Naive thymus-derived CD4-positive, alpha-beta T cell (primary cell): ENCODE measurements at regions of chr1 and their contacts with region 1.

Region 1: DNA sequence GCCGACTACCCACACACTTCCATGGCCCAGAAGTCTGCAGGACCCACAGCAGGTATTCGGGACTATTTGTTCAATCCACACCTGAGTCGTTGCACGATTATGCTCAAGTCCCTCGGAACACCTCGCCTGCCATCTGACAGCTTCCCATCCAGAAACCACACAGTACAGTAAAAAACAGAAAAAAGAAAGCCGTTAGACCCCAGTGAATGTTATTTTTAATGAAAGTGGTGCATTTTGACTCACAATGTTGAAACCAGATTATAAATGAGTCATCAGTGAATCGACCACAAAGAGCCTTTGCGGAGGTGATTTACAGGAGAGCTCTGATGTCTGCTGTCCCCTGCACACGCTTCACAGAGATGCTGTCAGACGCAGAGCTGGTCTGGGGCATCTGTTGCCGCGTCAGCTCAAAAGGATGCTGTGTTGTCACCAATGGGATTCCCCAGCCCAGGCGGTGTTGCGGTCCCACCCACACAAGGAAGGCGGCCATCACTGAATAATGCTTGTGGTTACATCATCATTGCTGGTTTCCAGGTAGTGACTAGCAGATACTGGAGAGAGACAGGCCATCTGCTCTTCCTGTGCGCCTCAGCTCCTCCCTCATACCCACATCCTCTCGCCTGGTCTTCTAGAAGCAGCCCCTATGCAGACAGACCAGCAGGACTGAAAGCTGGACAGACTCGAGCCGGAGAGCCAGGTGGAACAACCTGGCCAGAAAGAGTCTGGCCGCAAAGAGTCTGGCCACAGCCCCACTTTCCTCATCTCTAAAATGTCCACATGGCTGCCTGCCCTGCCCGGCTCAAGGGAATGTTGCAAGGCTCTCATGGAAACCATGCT is 116.8 kb downstream of the TOMM20 start:
- DNase-seq: peak; percentile 71 to 95 (median 93)
- ATAC-seq: peak; percentile 95
- H3K4me3 ChIP-seq: peak overlapping the region; percentile 48
- H3K4me3 Mint-ChIP-seq: peak overlapping the region; percentile 72 to 84 (median 80)
- H3K27ac ChIP-seq: peak overlapping the region; percentile 91
- H3K27ac Mint-ChIP-seq: peak overlapping the region; percentile 91 to 98 (median 97)
- H3K4me1 ChIP-seq: peaks cover 27 to 34% of the 10 kb centered on the region in 2 donors
- H3K4me1 Mint-ChIP-seq: peaks cover 36 to 79% (median 67%) of the 10 kb centered on the region in 7 donors
- H3K27me3 ChIP-seq: no peaks in the 10 kb centered on the region
- H3K27me3 Mint-ChIP-seq: peaks cover 0 to 5% (median 0%) of the 10 kb centered on the region in 5 donors

Region 2: GRCh38 chr1:233635765-233636502 is 1375.9 kb before region 1 on chr1:
- CTCF ChIA-PET with region 1: no interaction called
- POLR2A ChIA-PET with region 1: no interaction called
- intact Hi-C with region 1: no loop called
- DNase-seq: no peak
- ATAC-seq: no peak
- H3K4me3 ChIP-seq: no peak overlapping the region
- H3K4me3 Mint-ChIP-seq: no peak overlapping the region
- H3K27ac ChIP-seq: no peak overlapping the region
- H3K27ac Mint-ChIP-seq: peak overlapping the region in 1 of 9 donors; percentile 1
- H3K4me1 ChIP-seq: no peaks in the 10 kb centered on the region
- H3K4me1 Mint-ChIP-seq: no peaks in the 10 kb centered on the region
- H3K27me3 ChIP-seq: no peaks in the 10 kb centered on the region
- H3K27me3 Mint-ChIP-seq: peaks cover 4 to 40% (median 20%) of the 10 kb centered on the region in 5 donors

Region 3: GRCh38 chr1:234486498-234487448 is 525.0 kb before region 1 on chr1:
- CTCF ChIA-PET with region 1: no interaction called
- POLR2A ChIA-PET with region 1: no interaction called
- intact Hi-C with region 1: loop called in 1 of 2 experiments (anchors 5 kb)
- DNase-seq: peak in 6 of 9 donors; percentile 17 to 60 (median 44)
- ATAC-seq: peak; percentile 80
- H3K4me3 ChIP-seq: no peak overlapping the region
- H3K4me3 Mint-ChIP-seq: peak overlapping the region in 9 of 10 donors; percentile 10 to 74 (median 57)
- H3K27ac ChIP-seq: no peak overlapping the region
- H3K27ac Mint-ChIP-seq: peak overlapping the region; percentile 18 to 85 (median 79)
- H3K4me1 ChIP-seq: peaks cover 0 to 20% of the 10 kb centered on the region in 2 donors
- H3K4me1 Mint-ChIP-seq: peaks cover 20 to 42% (median 35%) of the 10 kb centered on the region in 7 donors
- H3K27me3 ChIP-seq: no peaks in the 10 kb centered on the region
- H3K27me3 Mint-ChIP-seq: peaks cover 0 to 22% (median 6%) of the 10 kb centered on the region in 5 donors

Region 4: GRCh38 chr1:234722904-234723720 is 288.7 kb before region 1 on chr1:
- CTCF ChIA-PET with region 1: no interaction called
- POLR2A ChIA-PET with region 1: no interaction called
- intact Hi-C with region 1: loop called (anchors 1 kb)
- DNase-seq: peak in 2 of 9 donors; percentile 51 to 68
- ATAC-seq: peak; percentile 12
- H3K4me3 ChIP-seq: peak overlapping the region; percentile 52
- H3K4me3 Mint-ChIP-seq: peak overlapping the region; percentile 51 to 85 (median 82)
- H3K27ac ChIP-seq: peak overlapping the region; percentile 95
- H3K27ac Mint-ChIP-seq: peak overlapping the region; percentile 87 to 99 (median 98)
- H3K4me1 ChIP-seq: peaks cover 39 to 46% of the 10 kb centered on the region in 2 donors
- H3K4me1 Mint-ChIP-seq: peaks cover 46 to 95% (median 84%) of the 10 kb centered on the region in 7 donors
- H3K27me3 ChIP-seq: no peaks in the 10 kb centered on the region
- H3K27me3 Mint-ChIP-seq: no peaks in the 10 kb centered on the region

Region 5: GRCh38 chr1:234842726-234843641 is 168.8 kb before region 1 on chr1:
- CTCF ChIA-PET with region 1: no interaction called
- POLR2A ChIA-PET with region 1: no interaction called
- intact Hi-C with region 1: loop called in 1 of 2 experiments (anchors 1 kb)
- DNase-seq: peak in 8 of 9 donors; percentile 7 to 81 (median 30)
- ATAC-seq: peak; percentile 26
- H3K4me3 ChIP-seq: peak overlapping the region; percentile 5
- H3K4me3 Mint-ChIP-seq: peak overlapping the region; percentile 30 to 77 (median 62)
- H3K27ac ChIP-seq: peak overlapping the region; percentile 15
- H3K27ac Mint-ChIP-seq: peak overlapping the region; percentile 30 to 90 (median 77)
- H3K4me1 ChIP-seq: peaks cover 36 to 57% of the 10 kb centered on the region in 2 donors
- H3K4me1 Mint-ChIP-seq: peaks cover 44 to 89% (median 74%) of the 10 kb centered on the region in 7 donors
- H3K27me3 ChIP-seq: no peaks in the 10 kb centered on the region
- H3K27me3 Mint-ChIP-seq: no peaks in the 10 kb centered on the region

Region 6: GRCh38 chr1:234862944-234863515 is 148.8 kb before region 1 on chr1:
- CTCF ChIA-PET with region 1: no interaction called
- POLR2A ChIA-PET with region 1: no interaction called
- intact Hi-C with region 1: no loop called
- DNase-seq: no peak
- ATAC-seq: no peak
- H3K4me3 ChIP-seq: no peak overlapping the region
- H3K4me3 Mint-ChIP-seq: no peak overlapping the region
- H3K27ac ChIP-seq: no peak overlapping the region
- H3K27ac Mint-ChIP-seq: no peak overlapping the region
- H3K4me1 ChIP-seq: no peaks in the 10 kb centered on the region
- H3K4me1 Mint-ChIP-seq: peaks cover 0 to 33% (median 10%) of the 10 kb centered on the region in 7 donors
- H3K27me3 ChIP-seq: peaks cover 0 to 2% of the 10 kb centered on the region in 2 donors
- H3K27me3 Mint-ChIP-seq: no peaks in the 10 kb centered on the region

Region 7: GRCh38 chr1:234978397-234979295 is 33.2 kb before region 1 on chr1:
- CTCF ChIA-PET with region 1: interaction called, 7 read pairs
- POLR2A ChIA-PET with region 1: interaction called, 5 read pairs
- intact Hi-C with region 1: loop called (anchors 1 to 2 kb)
- DNase-seq: peak in 4 of 9 donors; percentile 9 to 49 (median 40)
- ATAC-seq: peak; percentile 62
- H3K4me3 ChIP-seq: no peak overlapping the region
- H3K4me3 Mint-ChIP-seq: peak overlapping the region; percentile 16 to 78 (median 69)
- H3K27ac ChIP-seq: peak overlapping the region; percentile 18
- H3K27ac Mint-ChIP-seq: peak overlapping the region; percentile 66 to 94 (median 81)
- H3K4me1 ChIP-seq: peaks cover 34 to 48% of the 10 kb centered on the region in 2 donors
- H3K4me1 Mint-ChIP-seq: peaks cover 38 to 79% (median 45%) of the 10 kb centered on the region in 7 donors
- H3K27me3 ChIP-seq: no peaks in the 10 kb centered on the region
- H3K27me3 Mint-ChIP-seq: no peaks in the 10 kb centered on the region

Region 8: GRCh38 chr1:235648954-235649367 is 637.1 kb after region 1 on chr1:
- CTCF ChIA-PET with region 1: no interaction called
- POLR2A ChIA-PET with region 1: no interaction called
- intact Hi-C with region 1: loop called in 1 of 2 experiments (anchors 10 kb)
- DNase-seq: peak; percentile 18 to 70 (median 47)
- ATAC-seq: peak; percentile 84
- H3K4me3 ChIP-seq: peak overlapping the region; percentile 50
- H3K4me3 Mint-ChIP-seq: peak overlapping the region; percentile 58 to 90 (median 84)
- H3K27ac ChIP-seq: no peak overlapping the region
- H3K27ac Mint-ChIP-seq: peak overlapping the region in 3 of 9 donors; percentile 40 to 84 (median 73)
- H3K4me1 ChIP-seq: peaks cover 0 to 4% of the 10 kb centered on the region in 2 donors
- H3K4me1 Mint-ChIP-seq: peaks cover 11 to 33% (median 15%) of the 10 kb centered on the region in 7 donors
- H3K27me3 ChIP-seq: peaks cover 0 to 8% of the 10 kb centered on the region in 2 donors
- H3K27me3 Mint-ChIP-seq: peaks cover 60 to 74% (median 68%) of the 10 kb centered on the region in 5 donors